AG04450 (cell line): ENCODE measurements at regions of chr19 and their contacts with region 1.

Region 1: DNA sequence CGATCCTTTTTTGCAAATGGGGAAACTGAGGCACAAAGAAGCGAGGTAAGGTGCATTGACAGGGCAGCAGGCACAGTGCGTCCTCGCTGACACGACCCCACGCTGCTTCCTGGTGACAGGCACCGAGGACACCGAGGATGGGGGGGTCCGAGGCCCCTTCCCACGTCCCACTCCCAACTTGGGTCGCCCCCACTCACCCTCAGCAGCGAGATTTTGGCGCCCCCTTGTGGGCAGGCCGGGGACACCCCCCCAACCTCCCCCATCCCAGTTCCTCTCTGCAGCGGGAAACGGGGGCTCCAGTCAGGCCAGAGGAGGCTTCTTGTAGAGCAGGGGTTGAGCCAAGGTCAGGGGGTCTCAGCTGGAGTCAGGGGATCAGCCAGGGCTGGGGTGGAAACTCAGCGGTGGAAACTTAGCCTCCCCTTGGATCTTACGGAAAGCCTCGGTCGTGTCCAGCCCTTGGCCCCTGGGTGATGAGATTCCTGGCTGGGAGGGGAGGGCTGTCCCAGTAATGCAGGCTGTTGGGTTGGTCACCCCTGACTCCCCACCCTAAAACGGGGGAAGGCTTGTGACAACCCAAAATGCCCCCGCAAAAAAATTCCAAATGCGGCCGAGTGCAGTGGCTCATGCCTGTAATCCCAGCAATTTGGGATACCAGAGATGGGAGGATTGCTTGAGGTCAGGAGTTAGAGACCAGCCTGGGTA is 8.2 kb downstream of the SMIM24 start:
- DNase-seq: no peak
- H3K4me3 ChIP-seq: no peak overlapping the region
- H3K27ac ChIP-seq: no peak overlapping the region
- H3K27me3 ChIP-seq: peaks cover 4% of the 10 kb centered on the region
- CTCF ChIP-seq: peak; percentile 87

Region 2: GRCh38 chr19:3210347-3211017 is 261.6 kb before region 1 on chr19:
- CTCF ChIA-PET with region 1: interaction called, 11 read pairs
- POLR2A ChIA-PET with region 1: no interaction called
- DNase-seq: no peak
- H3K4me3 ChIP-seq: no peak overlapping the region
- H3K27ac ChIP-seq: no peak overlapping the region
- H3K27me3 ChIP-seq: no peaks in the 10 kb centered on the region
- CTCF ChIP-seq: peak; percentile 70

Region 3: DNA sequence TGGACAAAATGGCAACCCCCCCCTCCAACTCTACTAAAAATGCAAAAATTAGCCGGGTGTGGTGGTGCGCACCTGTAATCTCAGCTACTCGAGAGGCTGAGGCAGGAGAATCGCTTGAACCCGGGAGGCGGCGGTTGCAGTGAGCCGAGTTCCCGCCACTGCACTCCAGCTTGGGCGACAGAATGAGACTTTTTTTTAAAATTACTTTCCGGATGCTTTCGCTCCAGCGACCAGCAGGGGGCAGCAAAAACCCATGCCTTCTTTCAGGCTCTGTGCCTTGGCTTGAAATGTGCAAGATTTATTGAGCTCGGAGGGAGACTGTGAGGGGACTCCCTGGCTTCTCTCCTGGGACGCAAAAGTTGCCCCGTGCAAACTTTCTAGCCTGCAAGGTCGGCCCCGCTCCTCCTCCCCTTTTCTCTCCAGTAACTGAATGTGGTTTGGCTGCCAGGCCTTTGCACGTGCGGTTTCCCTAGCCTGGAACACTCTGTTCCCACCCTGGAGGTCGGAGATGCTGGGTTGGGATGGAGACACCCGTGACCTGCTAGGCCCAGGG is 167.2 kb before region 1 on chr19:
- CTCF ChIA-PET with region 1: interaction called, 42 read pairs
- POLR2A ChIA-PET with region 1: interaction called, 3 read pairs
- DNase-seq: peak; percentile 32
- H3K4me3 ChIP-seq: no peak overlapping the region
- H3K27ac ChIP-seq: no peak overlapping the region
- H3K27me3 ChIP-seq: peaks cover 14% of the 10 kb centered on the region
- CTCF ChIP-seq: peak; percentile 88

Region 4: GRCh38 chr19:3324321-3324856 is 147.7 kb before region 1 on chr19:
- CTCF ChIA-PET with region 1: interaction called, 77 read pairs
- POLR2A ChIA-PET with region 1: no interaction called
- DNase-seq: no peak
- H3K4me3 ChIP-seq: no peak overlapping the region
- H3K27ac ChIP-seq: no peak overlapping the region
- H3K27me3 ChIP-seq: peaks cover 13% of the 10 kb centered on the region
- CTCF ChIP-seq: peak; percentile 72

Region 5: GRCh38 chr19:3330047-3330446 is 142.1 kb before region 1 on chr19:
- CTCF ChIA-PET with region 1: interaction called, 77 read pairs
- POLR2A ChIA-PET with region 1: no interaction called
- DNase-seq: no peak
- H3K4me3 ChIP-seq: no peak overlapping the region
- H3K27ac ChIP-seq: no peak overlapping the region
- H3K27me3 ChIP-seq: peaks cover 2% of the 10 kb centered on the region
- CTCF ChIP-seq: no peak

Region 6: GRCh38 chr19:3386447-3387234 is 85.5 kb before region 1 on chr19:
- CTCF ChIA-PET with region 1: no interaction called
- POLR2A ChIA-PET with region 1: no interaction called
- DNase-seq: no peak
- H3K4me3 ChIP-seq: no peak overlapping the region
- H3K27ac ChIP-seq: no peak overlapping the region
- H3K27me3 ChIP-seq: no peaks in the 10 kb centered on the region
- CTCF ChIP-seq: no peak

Region 7: GRCh38 chr19:3434712-3435553 is 37.2 kb before region 1 on chr19:
- CTCF ChIA-PET with region 1: interaction called, 11 read pairs
- POLR2A ChIA-PET with region 1: no interaction called
- DNase-seq: peak; percentile 88
- H3K4me3 ChIP-seq: peak overlapping the region; percentile 54
- H3K27ac ChIP-seq: peak overlapping the region; percentile 89
- H3K27me3 ChIP-seq: no peaks in the 10 kb centered on the region
- CTCF ChIP-seq: no peak

Region 8: DNA sequence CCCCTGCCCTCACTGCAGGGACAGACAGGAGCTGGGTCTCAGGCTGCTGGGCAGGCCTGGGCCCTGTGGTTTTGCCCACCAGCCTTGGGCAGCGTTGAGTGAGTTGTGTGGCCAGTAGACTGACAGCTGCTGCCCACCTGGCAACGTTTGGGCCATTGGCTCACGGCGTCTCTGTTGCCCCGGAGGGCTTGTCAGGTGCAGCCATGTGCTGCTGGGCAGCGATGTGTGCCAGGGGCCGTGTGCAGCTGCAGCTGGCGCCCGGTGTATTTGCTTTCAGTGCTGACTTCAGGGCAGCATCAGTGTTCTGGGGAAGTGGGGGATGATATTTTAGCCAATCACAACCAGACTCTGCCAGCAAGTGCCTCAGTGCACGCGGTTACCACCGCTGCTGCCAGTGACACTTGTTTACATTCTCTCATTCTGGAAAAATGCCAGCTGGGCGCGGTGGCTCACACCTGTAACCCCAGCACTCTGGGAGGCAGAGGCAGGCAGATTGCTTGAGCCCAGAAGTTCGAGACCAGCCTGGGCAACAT is 44.6 kb after region 1 on chr19:
- CTCF ChIA-PET with region 1: no interaction called
- POLR2A ChIA-PET with region 1: no interaction called
- DNase-seq: no peak
- H3K4me3 ChIP-seq: no peak overlapping the region
- H3K27ac ChIP-seq: no peak overlapping the region
- H3K27me3 ChIP-seq: no peaks in the 10 kb centered on the region
- CTCF ChIP-seq: no peak

Region 9: GRCh38 chr19:3544742-3545668 is 72.9 kb after region 1 on chr19:
- CTCF ChIA-PET with region 1: no interaction called
- POLR2A ChIA-PET with region 1: no interaction called
- DNase-seq: no peak
- H3K4me3 ChIP-seq: no peak overlapping the region
- H3K27ac ChIP-seq: no peak overlapping the region
- H3K27me3 ChIP-seq: no peaks in the 10 kb centered on the region
- CTCF ChIP-seq: peak; percentile 91